ENCODE measurements at regions of chr20 and their contacts with region 1.

Region 1: GRCh38 chr20:36199345-36200257 is 36.7 kb upstream of the AAR2 start:
- DNase-seq: peak; percentile 87
- ATAC-seq: peak; percentile 81
- H3K4me3 Mint-ChIP-seq: no peak overlapping the region
- H3K27ac Mint-ChIP-seq: no peak overlapping the region
- H3K4me1 Mint-ChIP-seq: peaks cover 4% of the 10 kb centered on the region
- H3K27me3 Mint-ChIP-seq: peaks cover 4% of the 10 kb centered on the region

Region 2: GRCh38 chr20:35478804-35479472 is 720.7 kb before region 1 on chr20:
- CTCF ChIA-PET with region 1: no interaction called
- POLR2A ChIA-PET with region 1: no interaction called
- intact Hi-C with region 1: no loop called
- DNase-seq: peak; percentile 39
- ATAC-seq: no peak
- H3K4me3 Mint-ChIP-seq: no peak overlapping the region
- H3K27ac Mint-ChIP-seq: no peak overlapping the region
- H3K4me1 Mint-ChIP-seq: no peaks in the 10 kb centered on the region
- H3K27me3 Mint-ChIP-seq: no peaks in the 10 kb centered on the region

Region 3: GRCh38 chr20:36154700-36155628 is 44.6 kb before region 1 on chr20 and contains the start of gene EPB41L1:
- CTCF ChIA-PET with region 1: interaction called, 10 read pairs
- POLR2A ChIA-PET with region 1: no interaction called
- intact Hi-C with region 1: loop called (anchors 1 kb)
- DNase-seq: no peak
- ATAC-seq: no peak
- H3K4me3 Mint-ChIP-seq: peak within 1 kb of the TSS; percentile 59
- H3K27ac Mint-ChIP-seq: no peak within 1 kb of the TSS
- H3K4me1 Mint-ChIP-seq: peaks cover 8% of the 10 kb centered on the region
- H3K27me3 Mint-ChIP-seq: peaks cover 19% of the 10 kb centered on the region
- total RNA-seq, gene EPB41L1: 0.67 to 1.5 TPM

Region 4: DNA sequence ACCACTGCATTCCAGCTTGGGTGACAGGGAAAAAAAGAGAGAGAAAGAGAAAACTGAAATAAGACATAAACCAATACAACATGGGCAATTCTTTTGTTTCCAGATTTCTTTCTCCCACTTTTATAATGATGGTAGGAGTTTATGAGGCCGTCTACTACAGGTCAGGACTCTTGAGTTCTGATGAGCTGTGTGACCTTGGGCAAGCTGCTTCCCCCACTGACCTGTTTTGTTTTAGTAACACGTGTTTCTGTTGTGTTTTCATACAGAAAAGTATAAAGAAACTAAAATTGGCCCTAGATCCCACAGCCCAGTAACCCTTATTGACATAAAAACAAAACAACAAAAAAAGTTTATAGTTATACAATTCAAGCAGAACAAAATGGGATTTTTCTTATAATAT is 13.8 kb after region 1 on chr20:
- CTCF ChIA-PET with region 1: interaction called, 18 read pairs
- POLR2A ChIA-PET with region 1: no interaction called
- intact Hi-C with region 1: no loop called
- DNase-seq: no peak
- ATAC-seq: no peak
- H3K4me3 Mint-ChIP-seq: no peak overlapping the region
- H3K27ac Mint-ChIP-seq: no peak overlapping the region
- H3K4me1 Mint-ChIP-seq: no peaks in the 10 kb centered on the region
- H3K27me3 Mint-ChIP-seq: no peaks in the 10 kb centered on the region

Region 5: DNA sequence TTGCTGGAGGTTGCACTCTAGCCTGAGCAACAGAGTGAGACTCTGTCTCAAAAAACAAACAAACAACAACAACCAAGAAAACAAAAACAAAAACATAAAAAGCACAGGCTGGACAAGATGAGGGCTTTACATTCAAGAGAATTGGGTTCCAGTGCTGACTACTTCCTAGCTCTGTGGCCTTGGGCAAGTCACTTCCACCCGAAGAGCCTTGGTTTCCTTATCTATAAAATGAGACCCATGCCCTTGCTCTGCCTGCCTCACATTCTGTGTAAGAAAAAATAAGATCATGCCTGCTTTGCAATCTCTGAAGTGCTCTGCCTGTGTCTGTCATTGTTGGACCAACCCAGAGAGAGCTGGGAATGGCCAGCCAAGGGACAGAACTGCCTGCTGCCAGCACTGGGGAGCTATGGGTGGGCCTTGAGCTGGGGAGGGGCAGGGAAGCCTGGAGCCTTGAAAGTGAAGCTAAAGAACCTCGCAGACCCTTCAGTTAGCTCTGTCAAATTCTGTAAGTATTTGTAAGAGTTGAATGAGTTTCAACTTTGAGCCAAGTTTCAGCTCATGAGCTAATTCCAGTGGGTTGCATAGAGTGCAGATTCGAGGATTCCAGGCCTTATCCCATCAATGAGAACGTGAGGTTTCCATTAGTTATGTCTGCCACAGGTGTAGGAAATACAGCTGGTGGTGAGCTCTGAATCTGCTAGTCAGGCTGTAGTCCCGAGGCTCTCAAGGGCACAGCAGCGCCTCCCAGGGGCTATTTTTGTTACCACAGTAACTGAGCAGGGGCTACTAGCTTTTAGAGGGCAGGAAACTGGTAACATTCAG is 199.8 kb after region 1 on chr20:
- CTCF ChIA-PET with region 1: interaction called, 16 read pairs
- POLR2A ChIA-PET with region 1: interaction called, 3 read pairs
- intact Hi-C with region 1: loop called (anchors 1 to 5 kb)
- DNase-seq: peak; percentile 76
- ATAC-seq: peak; percentile 83
- H3K4me3 Mint-ChIP-seq: no peak overlapping the region
- H3K27ac Mint-ChIP-seq: no peak overlapping the region
- H3K4me1 Mint-ChIP-seq: no peaks in the 10 kb centered on the region
- H3K27me3 Mint-ChIP-seq: peaks cover 16% of the 10 kb centered on the region

Region 6: GRCh38 chr20:36439040-36439730 is 239.6 kb after region 1 on chr20:
- CTCF ChIA-PET with region 1: interaction called, 43 read pairs
- POLR2A ChIA-PET with region 1: no interaction called
- intact Hi-C with region 1: loop called (anchors 1 kb)
- DNase-seq: peak; percentile 81
- ATAC-seq: peak; percentile 45
- H3K4me3 Mint-ChIP-seq: no peak overlapping the region
- H3K27ac Mint-ChIP-seq: no peak overlapping the region
- H3K4me1 Mint-ChIP-seq: peaks cover 2% of the 10 kb centered on the region
- H3K27me3 Mint-ChIP-seq: no peaks in the 10 kb centered on the region

Region 7: DNA sequence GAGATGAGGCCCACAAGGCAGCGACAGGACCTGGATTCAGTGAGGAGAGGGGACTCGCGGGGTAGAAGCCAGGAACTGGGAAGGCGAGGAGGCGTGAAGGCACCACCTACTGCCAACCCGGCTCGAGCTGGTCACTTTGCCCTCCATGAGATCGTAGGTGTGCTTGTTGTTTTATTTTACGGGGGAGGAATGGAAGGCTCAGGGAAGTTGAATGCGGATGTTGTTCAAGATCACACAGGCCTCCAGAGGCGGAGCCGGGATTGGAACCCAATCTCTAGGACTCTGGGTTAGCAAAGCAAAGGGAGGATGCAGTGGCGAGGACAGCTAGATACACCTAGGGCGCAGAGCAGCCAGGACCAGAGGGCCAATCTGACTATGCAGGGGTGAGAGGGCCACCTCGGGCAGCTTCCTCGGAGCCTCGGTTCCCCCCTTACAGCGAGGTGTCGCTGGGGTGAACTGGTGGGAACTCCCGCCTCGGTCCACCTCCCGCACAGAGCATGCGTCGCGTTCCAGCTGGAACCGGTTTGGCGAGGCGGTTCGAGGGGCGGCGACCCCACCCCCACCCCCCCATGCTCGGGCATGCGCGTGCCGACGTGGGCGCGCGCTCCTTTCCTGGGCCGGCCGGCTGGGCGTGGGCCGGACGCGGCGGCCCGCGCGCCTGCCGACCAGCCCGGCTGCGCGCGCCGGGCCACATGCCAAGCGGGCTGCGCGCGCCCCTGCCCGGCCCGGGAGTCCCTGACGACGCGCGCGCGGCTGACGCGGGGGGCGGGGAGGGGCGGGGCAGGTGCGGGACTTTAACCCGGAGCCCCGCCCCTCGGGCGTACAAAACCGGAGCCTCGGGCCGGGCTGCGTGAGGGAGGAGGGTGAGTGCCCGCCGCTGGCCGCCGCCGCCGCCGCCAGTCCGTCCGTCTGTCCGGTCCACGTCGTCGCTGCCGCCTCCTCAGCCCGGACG is 261.3 kb after region 1 on chr20:
- CTCF ChIA-PET with region 1: no interaction called
- POLR2A ChIA-PET with region 1: no interaction called
- intact Hi-C with region 1: no loop called
- DNase-seq: peak; percentile 95
- ATAC-seq: peak; percentile 78
- H3K4me3 Mint-ChIP-seq: peak overlapping the region; percentile 67
- H3K27ac Mint-ChIP-seq: peak overlapping the region; percentile 83
- H3K4me1 Mint-ChIP-seq: peaks cover 47% of the 10 kb centered on the region
- H3K27me3 Mint-ChIP-seq: no peaks in the 10 kb centered on the region

Region 8: DNA sequence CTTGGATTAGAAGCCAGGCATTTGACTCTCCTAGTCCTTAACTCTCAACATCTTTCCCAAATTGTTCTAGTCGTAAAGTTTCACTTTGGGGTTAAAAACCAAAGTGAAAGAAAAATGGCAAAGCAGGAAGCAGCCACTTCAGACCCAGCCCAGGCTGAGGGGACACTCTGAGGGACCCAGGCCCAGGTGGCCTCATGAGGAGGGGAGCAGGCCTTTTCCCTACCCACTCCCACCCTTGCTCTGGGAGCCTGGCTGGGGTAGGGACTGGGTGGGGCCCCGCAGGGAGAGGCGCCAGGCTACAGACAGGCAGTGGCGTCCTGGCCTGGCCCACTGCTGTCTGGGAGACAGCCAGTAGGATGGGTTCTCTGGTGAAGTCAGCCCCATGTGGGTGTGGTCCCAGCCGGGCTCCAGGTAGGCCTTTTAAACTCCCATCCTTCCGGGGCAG is 273.1 kb after region 1 on chr20:
- CTCF ChIA-PET with region 1: no interaction called
- POLR2A ChIA-PET with region 1: no interaction called
- intact Hi-C with region 1: no loop called
- DNase-seq: peak; percentile 64
- ATAC-seq: peak; percentile 92
- H3K4me3 Mint-ChIP-seq: peak overlapping the region; percentile 61
- H3K27ac Mint-ChIP-seq: peak overlapping the region; percentile 79
- H3K4me1 Mint-ChIP-seq: peaks cover 40% of the 10 kb centered on the region
- H3K27me3 Mint-ChIP-seq: no peaks in the 10 kb centered on the region

Region 9: DNA sequence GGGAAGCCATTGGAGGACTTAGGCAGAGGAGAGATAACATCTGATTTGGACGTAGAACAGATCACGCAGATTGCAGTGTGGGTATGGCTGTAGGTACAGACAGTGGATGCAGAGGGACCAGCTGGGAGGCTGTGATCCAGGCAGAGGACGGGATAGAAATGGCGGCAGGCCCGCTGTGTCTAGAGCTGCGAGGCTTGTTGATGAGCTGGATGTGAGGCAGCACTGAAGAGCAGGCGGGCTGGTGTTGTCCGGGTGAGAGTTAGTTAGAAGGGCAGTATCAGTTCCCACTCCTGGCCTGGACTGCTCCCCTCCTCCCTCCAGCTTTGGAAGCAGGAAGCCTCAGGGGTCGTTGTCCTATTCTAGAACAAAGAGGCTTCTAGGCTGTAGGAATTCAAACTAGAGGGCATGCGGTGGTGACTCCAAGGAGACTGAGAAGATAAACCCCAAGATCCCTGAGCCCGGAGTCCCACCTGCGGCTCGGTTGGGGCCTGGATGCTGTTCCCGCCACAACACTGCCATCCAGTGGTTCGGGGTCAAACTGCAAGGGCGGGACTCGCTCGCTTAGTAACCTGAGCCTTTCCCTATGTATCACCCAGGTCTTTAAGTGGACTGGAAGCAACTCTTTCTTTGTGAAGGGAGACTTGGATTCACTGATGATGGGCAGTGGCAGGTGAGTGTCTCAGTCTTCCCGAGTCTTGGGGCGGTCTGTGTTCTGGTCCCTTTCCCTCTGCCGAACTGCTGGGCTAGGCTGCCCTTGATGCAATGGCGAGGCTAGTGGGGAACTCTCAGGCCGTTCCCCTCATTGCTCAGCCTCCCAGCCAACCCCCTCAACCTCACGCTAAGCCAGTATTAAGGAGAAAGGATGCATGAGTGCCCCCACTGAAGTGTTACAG is 687.5 kb after region 1 on chr20:
- CTCF ChIA-PET with region 1: no interaction called
- POLR2A ChIA-PET with region 1: no interaction called
- intact Hi-C with region 1: loop called in 1 of 2 experiments (anchors 10 kb)
- DNase-seq: peak; percentile 92
- ATAC-seq: peak; percentile 97
- H3K4me3 Mint-ChIP-seq: no peak overlapping the region
- H3K27ac Mint-ChIP-seq: peak overlapping the region; percentile 9
- H3K4me1 Mint-ChIP-seq: peaks cover 14% of the 10 kb centered on the region
- H3K27me3 Mint-ChIP-seq: no peaks in the 10 kb centered on the region

Measured in activated CD4-positive, alpha-beta T cell treated with anti-CD3 and anti-CD28 coated beads for 36 hours (primary cell).